ENCODE measurements at regions of chr6 and their contacts with region 1.

Region 1: DNA sequence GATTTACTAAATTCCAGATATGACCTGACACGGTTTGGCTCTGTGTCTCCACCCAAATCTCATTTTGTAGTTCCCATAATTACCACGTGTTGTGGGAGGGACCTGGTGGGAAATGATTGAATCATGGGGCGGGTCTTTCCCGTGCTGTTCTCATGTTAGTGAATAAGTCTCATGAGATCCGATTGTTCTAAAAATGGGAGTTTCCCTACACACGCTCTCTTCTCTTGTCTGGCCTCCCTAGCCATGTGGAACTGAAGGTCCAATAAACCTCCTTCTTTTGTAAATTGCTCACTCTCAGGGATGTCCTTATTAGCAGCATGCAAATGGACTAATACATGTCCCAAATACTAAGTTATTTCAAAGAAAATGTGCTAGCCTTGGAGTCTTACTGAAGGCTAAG is 121.1 kb downstream of the CENPW start:
- DNase-seq: no peak
- ATAC-seq: no peak
- H3K4me3 Mint-ChIP-seq: no peak overlapping the region
- H3K27ac Mint-ChIP-seq: no peak overlapping the region
- H3K4me1 Mint-ChIP-seq: no peaks in the 10 kb centered on the region
- H3K27me3 Mint-ChIP-seq: no peaks in the 10 kb centered on the region

Region 2: DNA sequence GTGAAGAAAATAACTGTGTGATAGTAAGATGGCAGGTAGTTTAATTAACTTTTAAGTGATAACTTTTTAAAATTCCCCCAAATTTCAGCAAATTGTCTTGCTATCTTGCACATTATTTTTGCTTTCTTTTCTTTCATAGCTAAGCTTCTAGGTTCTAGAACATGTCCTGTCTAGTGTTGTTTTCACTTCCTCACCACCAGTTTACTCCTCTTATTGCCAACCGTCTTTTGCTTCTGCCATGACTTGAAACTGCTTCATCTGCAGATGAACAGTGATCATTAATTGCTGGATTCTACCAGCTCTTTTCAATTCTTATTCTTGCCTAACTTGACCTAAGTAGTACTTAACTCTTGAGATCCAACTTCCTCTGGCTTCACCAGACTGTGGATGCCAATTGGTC is 16.6 kb after region 1 on chr6:
- CTCF ChIA-PET with region 1: no interaction called
- POLR2A ChIA-PET with region 1: no interaction called
- intact Hi-C with region 1: no loop called
- DNase-seq: no peak
- ATAC-seq: no peak
- H3K4me3 Mint-ChIP-seq: no peak overlapping the region
- H3K27ac Mint-ChIP-seq: no peak overlapping the region
- H3K4me1 Mint-ChIP-seq: no peaks in the 10 kb centered on the region
- H3K27me3 Mint-ChIP-seq: no peaks in the 10 kb centered on the region

Region 3: DNA sequence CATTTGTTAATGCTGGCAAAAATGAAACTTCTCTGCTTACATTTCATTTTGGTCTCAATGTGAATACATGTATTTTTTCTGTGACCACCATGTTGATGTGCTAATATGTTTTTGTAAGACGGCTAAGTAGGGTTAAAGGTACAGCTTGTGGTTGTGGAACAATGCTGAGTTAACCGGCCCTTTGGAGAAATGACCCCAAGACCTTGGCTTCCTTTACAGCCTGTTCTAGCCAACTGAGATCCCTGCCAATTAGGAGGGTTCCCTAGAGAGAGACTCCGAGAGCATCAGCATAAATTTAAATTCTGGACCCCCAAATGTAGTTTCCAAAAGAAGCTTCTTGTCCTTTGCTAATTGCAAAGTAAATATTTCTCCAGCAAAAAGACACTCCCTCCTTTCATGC is 701.8 kb after region 1 on chr6:
- CTCF ChIA-PET with region 1: no interaction called
- POLR2A ChIA-PET with region 1: interaction called, 10 read pairs
- intact Hi-C with region 1: no loop called
- DNase-seq: no peak
- ATAC-seq: no peak
- H3K4me3 Mint-ChIP-seq: no peak overlapping the region
- H3K27ac Mint-ChIP-seq: no peak overlapping the region
- H3K4me1 Mint-ChIP-seq: no peaks in the 10 kb centered on the region
- H3K27me3 Mint-ChIP-seq: peaks cover 9% of the 10 kb centered on the region

Measured in activated CD4-positive, alpha-beta T cell treated with anti-CD3 and anti-CD28 coated beads for 36 hours (primary cell).